Heart left ventricle (tissue), 16 donors: ENCODE measurements at regions of chr13 and their contacts with region 1.

Region 1: GRCh38 chr13:41263261-41264027 is at the start of gene MTRF1:
- DNase-seq: peak; percentile 83 to 87 (median 85)
- ATAC-seq: peak; percentile 93 to 98 (median 97)
- H3K4me3 ChIP-seq: peak within 1 kb of the TSS; percentile 41 to 85 (median 66)
- H3K27ac ChIP-seq: peak within 1 kb of the TSS; percentile 33 to 89 (median 84)
- H3K4me1 ChIP-seq: peaks cover 0 to 14% (median 5%) of the 10 kb centered on the region in 12 donors
- H3K27me3 ChIP-seq: no peaks in the 10 kb centered on the region
- CTCF ChIP-seq: no peak
- POLR2A ChIP-seq: peak in 1 of 2 donors; percentile 24
- total RNA-seq, gene MTRF1: 8.3 to 12.0 (median 10.7) TPM

Region 2: GRCh38 chr13:40770934-40771618 is 492.4 kb before region 1 on chr13 and contains the start of gene MRPS31:
- intact Hi-C with region 1: loop called in 1 of 10 experiments (anchors 5 kb)
- DNase-seq: peak; percentile 95 to 98 (median 97)
- ATAC-seq: peak; percentile 99 to 100 (median 100)
- H3K4me3 ChIP-seq: peak within 1 kb of the TSS; percentile 58 to 90 (median 75)
- H3K27ac ChIP-seq: peak within 1 kb of the TSS; percentile 63 to 92 (median 84)
- H3K4me1 ChIP-seq: peaks cover 0 to 25% (median 13%) of the 10 kb centered on the region in 12 donors
- H3K27me3 ChIP-seq: no peaks in the 10 kb centered on the region
- CTCF ChIP-seq: no peak
- POLR2A ChIP-seq: peak in 1 of 2 donors; percentile 63
- total RNA-seq, gene MRPS31: 21.9 to 33.1 (median 27.1) TPM

Region 3: DNA sequence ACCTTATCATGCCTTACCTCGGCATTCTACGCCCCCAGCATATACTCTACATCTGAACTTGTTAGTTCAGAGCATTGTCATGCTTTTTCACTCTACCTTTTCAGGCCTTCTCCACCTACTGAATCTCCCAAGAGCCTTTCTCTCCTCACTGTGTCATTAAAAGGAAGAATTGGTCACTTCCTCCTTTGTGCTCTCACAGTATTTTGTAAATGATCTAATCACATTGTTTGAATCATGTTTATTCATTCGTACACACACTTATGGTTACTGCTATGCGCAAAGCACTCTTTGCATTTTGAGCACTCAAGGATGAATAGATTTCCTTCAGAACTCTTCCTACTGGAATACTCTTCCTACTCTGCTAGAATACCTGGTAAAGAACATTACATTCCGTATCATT is 228.6 kb before region 1 on chr13:
- intact Hi-C with region 1: no loop called
- DNase-seq: no peak
- ATAC-seq: peak in 1 of 4 donors; percentile 26
- H3K4me3 ChIP-seq: no peak overlapping the region
- H3K27ac ChIP-seq: no peak overlapping the region
- H3K4me1 ChIP-seq: peaks cover 0 to 43% (median 14%) of the 10 kb centered on the region in 12 donors
- H3K27me3 ChIP-seq: no peaks in the 10 kb centered on the region
- CTCF ChIP-seq: no peak
- POLR2A ChIP-seq: no peak

Region 4: DNA sequence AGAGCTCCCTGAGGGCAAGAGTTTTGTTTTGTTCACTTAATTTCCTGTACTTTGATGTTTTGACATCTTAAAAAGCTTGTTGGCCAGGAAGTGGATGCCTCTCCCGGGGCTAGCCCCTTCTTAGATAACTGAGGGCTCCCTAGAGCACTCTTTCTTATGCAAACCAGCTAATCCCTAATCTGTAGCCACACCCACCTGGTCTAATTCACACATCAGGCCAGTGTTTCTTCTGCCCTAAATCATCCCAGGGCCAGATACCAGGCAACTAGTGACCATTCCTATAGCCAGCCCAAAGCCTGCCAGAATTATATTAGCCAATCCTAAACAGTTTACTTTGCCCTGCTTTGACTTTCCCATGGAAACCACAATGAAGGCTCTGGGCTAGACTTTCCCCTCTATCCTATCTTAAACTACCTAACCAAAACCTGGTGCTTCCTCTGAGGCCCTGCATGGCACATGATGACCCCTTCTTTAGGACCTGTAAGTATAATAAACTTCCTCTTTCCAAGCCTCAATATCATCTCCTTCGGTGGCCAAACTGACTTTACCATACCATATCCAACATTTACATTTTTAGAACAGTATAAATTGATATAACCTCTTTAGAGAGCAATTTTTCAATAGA is 177.4 kb before region 1 on chr13:
- intact Hi-C with region 1: no loop called
- DNase-seq: no peak
- ATAC-seq: no peak
- H3K4me3 ChIP-seq: no peak overlapping the region
- H3K27ac ChIP-seq: no peak overlapping the region
- H3K4me1 ChIP-seq: no peaks in the 10 kb centered on the region
- H3K27me3 ChIP-seq: no peaks in the 10 kb centered on the region
- CTCF ChIP-seq: no peak
- POLR2A ChIP-seq: no peak

Region 5: GRCh38 chr13:41132512-41133152 is 130.8 kb before region 1 on chr13 and contains the start of gene KBTBD6:
- intact Hi-C with region 1: loop called in 1 of 10 experiments (anchors 5 kb)
- DNase-seq: peak; percentile 96 to 98 (median 97)
- ATAC-seq: peak; percentile 96 to 100 (median 99)
- H3K4me3 ChIP-seq: peak within 1 kb of the TSS; percentile 64 to 88 (median 76)
- H3K27ac ChIP-seq: peak within 1 kb of the TSS; percentile 77 to 91 (median 86)
- H3K4me1 ChIP-seq: peaks cover 0 to 48% (median 34%) of the 10 kb centered on the region in 12 donors
- H3K27me3 ChIP-seq: no peaks in the 10 kb centered on the region
- CTCF ChIP-seq: no peak
- POLR2A ChIP-seq: peak in 1 of 2 donors; percentile 72
- total RNA-seq, gene KBTBD6: 6.1 to 11.9 (median 6.7) TPM

Region 6: DNA sequence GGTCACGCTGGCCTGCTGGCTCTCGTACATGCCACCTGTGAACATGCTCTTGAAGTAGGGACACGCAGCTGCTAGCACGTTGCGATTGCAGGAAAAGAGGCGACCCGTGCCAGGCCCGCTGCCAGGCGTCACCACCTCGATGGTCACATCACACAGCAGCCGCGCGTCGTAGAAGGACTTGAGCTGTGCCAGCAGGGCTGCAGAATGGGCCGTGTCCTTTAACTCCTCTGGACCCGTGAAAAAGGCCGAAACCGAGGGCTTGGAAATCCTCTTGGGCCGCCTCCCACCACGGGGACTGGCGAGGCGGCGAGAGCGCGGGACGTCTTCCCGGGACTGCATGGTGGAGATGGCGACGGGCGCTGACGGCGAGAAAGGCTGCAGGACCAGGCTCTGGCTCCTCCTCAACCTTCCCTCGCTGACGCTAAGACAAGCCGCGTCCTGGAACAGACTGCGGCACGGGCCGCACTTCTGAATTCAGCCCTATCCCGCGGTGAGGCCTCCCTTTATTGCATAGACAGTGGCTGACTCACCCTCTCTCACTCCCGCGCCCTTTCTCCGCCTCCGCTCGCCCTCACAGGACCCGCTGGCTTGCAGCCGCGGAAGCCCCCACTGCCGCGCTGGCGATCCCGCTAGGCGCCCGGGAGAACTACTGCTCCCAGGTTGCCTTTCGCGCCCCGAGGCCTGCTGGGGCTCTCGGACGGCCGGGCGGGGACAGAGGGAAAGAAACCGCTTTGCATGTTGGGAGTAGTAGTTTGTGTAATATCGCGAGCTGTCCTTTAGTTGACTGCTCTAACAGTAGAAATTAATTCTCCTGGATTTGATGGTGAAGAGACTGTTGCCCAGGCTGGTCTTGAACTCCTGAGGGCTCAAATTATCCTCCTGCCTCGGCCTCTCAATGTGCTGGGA is 69.3 kb before region 1 on chr13 and contains the start of gene KBTBD7:
- intact Hi-C with region 1: loop called in 4 of 10 experiments (anchors 5 to 10 kb)
- DNase-seq: peak; percentile 94 to 97 (median 96)
- ATAC-seq: peak; percentile 95 to 100 (median 100)
- H3K4me3 ChIP-seq: peak within 1 kb of the TSS; percentile 56 to 92 (median 78)
- H3K27ac ChIP-seq: peak within 1 kb of the TSS; percentile 75 to 97 (median 92)
- H3K4me1 ChIP-seq: peaks cover 0 to 37% (median 17%) of the 10 kb centered on the region in 12 donors
- H3K27me3 ChIP-seq: no peaks in the 10 kb centered on the region
- CTCF ChIP-seq: peak in 3 of 12 donors; percentile 11 to 31 (median 18)
- POLR2A ChIP-seq: peak in 1 of 2 donors; percentile 82
- total RNA-seq, gene KBTBD7: 4.2 to 9.1 (median 6.0) TPM

Region 7: GRCh38 chr13:41310963-41311606 is 47.6 kb after region 1 on chr13 and contains the start of gene NAA16:
- intact Hi-C with region 1: loop called in 1 of 10 experiments (anchors 5 kb)
- DNase-seq: peak; percentile 93 to 97 (median 94)
- ATAC-seq: peak; percentile 90 to 96 (median 94)
- H3K4me3 ChIP-seq: peak within 1 kb of the TSS; percentile 64 to 100 (median 80)
- H3K27ac ChIP-seq: peak within 1 kb of the TSS; percentile 52 to 97 (median 92)
- H3K4me1 ChIP-seq: peaks cover 0 to 45% (median 27%) of the 10 kb centered on the region in 12 donors
- H3K27me3 ChIP-seq: no peaks in the 10 kb centered on the region
- CTCF ChIP-seq: peak in 3 of 12 donors; percentile 15 to 25 (median 23)
- POLR2A ChIP-seq: peak in 1 of 2 donors; percentile 58
- total RNA-seq, gene NAA16: 4.2 to 10.7 (median 7.7) TPM

Region 8: DNA sequence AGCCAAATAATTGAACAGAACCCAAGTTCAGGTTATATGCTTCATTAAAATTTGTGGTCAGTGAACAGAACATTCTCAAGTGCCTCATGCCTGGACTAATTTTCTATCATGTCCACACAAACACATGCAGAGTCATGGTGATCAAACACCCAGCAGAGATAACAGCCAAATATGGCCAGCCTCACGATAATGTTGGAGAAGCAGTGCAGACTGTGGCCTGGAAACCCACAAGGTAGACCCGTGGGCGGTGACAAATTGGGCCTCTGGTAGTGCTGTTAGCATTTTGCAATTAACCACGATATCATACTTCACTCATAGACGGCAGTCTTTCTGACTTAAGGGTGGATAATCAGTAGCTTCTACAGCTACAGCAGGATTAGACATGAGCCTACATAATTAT is 732.5 kb after region 1 on chr13:
- intact Hi-C with region 1: no loop called
- DNase-seq: no peak
- ATAC-seq: peak; percentile 57 to 75 (median 62)
- H3K4me3 ChIP-seq: no peak overlapping the region
- H3K27ac ChIP-seq: no peak overlapping the region
- H3K4me1 ChIP-seq: peaks cover 0 to 6% (median 0%) of the 10 kb centered on the region in 12 donors
- H3K27me3 ChIP-seq: no peaks in the 10 kb centered on the region
- CTCF ChIP-seq: no peak
- POLR2A ChIP-seq: no peak

Region 9: DNA sequence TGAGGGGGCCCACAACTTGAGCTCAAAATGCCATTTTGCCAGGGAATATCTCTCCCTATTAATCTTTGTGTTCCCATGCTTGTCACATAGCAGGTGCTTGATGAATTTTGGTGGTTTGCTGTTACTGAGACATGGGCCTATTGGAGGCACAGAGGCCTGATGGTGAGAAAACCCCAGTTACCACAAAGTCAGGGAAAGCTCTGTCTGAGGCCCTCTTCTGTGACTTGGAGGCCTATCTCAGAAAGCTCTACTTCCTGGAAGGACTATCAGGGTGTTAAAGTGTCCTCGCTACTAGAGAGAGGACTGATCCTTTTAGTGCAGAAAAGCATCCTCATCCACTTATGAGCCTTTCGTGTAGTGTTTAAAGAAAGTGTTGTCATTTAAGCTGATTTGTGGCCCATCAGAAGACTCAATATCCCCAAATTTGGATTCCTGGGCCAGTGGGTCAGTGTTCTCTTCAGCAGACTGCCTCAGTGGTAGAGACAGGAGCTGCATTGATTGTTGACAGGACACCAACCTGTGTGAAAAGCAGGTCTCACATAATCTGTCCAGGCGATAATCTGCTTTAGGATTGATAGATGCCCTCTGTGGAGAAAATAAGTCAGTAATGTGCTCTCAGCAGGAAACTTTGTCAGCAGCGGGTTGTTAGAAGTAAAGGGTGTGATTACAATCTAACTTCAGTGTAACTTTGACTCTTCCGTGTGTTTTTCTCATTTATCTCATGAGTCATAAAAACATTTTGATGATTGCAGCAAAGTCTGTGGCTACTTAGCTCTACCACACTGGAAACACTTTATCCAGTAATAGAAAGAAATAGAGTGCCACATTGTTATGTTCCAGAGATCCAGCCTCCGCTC is 1129.5 kb after region 1 on chr13:
- intact Hi-C with region 1: no loop called
- DNase-seq: no peak
- ATAC-seq: no peak
- H3K4me3 ChIP-seq: no peak overlapping the region
- H3K27ac ChIP-seq: peak overlapping the region in 1 of 12 donors; percentile 76
- H3K4me1 ChIP-seq: peaks cover 0 to 23% (median 0%) of the 10 kb centered on the region in 12 donors
- H3K27me3 ChIP-seq: peaks cover 0 to 7% (median 0%) of the 10 kb centered on the region in 9 donors
- CTCF ChIP-seq: no peak
- POLR2A ChIP-seq: no peak